ENCODE measurements at regions of chr4 and their contacts with region 1.

Region 1: DNA sequence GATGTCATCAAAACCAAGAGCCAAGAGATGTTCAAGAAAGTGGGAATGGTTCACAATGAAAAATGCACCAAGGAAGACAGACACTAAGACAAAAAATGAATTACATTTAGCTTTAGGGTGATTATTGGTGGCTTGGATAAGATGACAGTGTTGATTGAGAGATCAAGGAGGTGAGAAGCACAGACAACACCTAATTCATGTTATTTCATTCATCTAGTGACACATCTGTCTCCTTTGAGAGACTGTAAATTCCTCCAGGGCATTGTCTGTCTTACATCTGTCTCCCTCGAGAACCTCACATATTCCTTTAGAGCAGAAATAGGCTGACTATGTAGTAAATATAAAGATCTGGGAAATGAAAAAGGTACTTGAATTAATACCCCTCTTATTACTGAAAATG is 94.2 kb upstream of the SMIM31 start:
- DNase-seq: no peak
- H3K4me3 ChIP-seq: no peak overlapping the region
- H3K27ac ChIP-seq: no peak overlapping the region
- H3K4me1 ChIP-seq: no peaks in the 10 kb centered on the region
- H3K27me3 ChIP-seq: no peaks in the 10 kb centered on the region
- CTCF ChIP-seq: no peak
- POLR2A ChIP-seq: no peak

Region 2: GRCh38 chr4:164261831-164262230 is 397.9 kb before region 1 on chr4:
- CTCF ChIA-PET with region 1: no interaction called
- POLR2A ChIA-PET with region 1: no interaction called
- dilution Hi-C with region 1: no loop called
- intact Hi-C with region 1: no loop called
- DNase-seq: no peak
- H3K4me3 ChIP-seq: no peak overlapping the region
- H3K27ac ChIP-seq: no peak overlapping the region
- H3K4me1 ChIP-seq: no peaks in the 10 kb centered on the region
- H3K27me3 ChIP-seq: no peaks in the 10 kb centered on the region
- CTCF ChIP-seq: no peak
- POLR2A ChIP-seq: no peak

Region 3: GRCh38 chr4:165651901-165652300 is 992.1 kb after region 1 on chr4:
- CTCF ChIA-PET with region 1: no interaction called
- POLR2A ChIA-PET with region 1: no interaction called
- dilution Hi-C with region 1: no loop called
- intact Hi-C with region 1: loop called (anchors 5 kb)
- DNase-seq: no peak
- H3K4me3 ChIP-seq: no peak overlapping the region
- H3K27ac ChIP-seq: no peak overlapping the region
- H3K4me1 ChIP-seq: peaks cover 6% of the 10 kb centered on the region
- H3K27me3 ChIP-seq: no peaks in the 10 kb centered on the region
- CTCF ChIP-seq: no peak
- POLR2A ChIP-seq: no peak